ENCODE measurements at regions of chr19 and their contacts with region 1.

Region 1: DNA sequence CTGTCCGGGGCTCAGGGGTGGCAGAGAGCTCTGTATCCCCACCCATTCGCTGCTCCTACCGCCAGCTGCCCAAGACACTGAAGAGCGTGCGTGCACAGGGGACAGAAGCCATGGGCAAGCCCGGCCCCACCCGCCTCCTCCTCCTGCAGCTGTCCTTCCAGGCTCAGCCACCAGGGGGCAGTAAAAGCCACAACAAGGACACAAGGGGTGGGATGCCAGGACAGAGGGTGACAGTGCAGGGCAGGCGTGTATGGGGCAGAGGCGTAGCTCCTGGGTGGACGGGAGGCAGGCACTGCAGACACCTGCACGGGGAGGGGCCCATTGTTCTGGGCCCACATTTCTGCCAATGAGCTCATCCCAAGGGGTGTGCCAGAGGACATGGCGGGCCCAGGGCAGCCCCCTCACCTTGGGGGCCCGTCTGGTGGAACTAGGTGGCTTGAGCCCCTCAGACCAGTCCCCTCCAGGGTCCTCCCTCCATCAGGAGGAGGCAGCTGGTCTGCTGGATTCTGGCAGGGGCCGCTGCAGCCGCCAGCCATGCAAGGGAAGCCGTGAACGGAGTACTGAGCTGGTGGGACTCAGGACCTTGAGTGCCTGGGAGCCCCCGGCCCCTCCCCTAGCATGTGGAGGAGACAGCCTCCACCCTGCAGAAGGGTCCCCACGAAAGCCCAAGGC is 61.1 kb downstream of the MLLT1 start:
- DNase-seq: peak; percentile 88
- H3K4me3 ChIP-seq: no peak overlapping the region
- H3K27ac ChIP-seq: no peak overlapping the region
- H3K4me1 ChIP-seq: no peaks in the 10 kb centered on the region
- H3K27me3 ChIP-seq: no peaks in the 10 kb centered on the region
- CTCF ChIP-seq: peak; percentile 92 to 99 (median 98)
- POLR2A ChIP-seq: no peak

Region 2: DNA sequence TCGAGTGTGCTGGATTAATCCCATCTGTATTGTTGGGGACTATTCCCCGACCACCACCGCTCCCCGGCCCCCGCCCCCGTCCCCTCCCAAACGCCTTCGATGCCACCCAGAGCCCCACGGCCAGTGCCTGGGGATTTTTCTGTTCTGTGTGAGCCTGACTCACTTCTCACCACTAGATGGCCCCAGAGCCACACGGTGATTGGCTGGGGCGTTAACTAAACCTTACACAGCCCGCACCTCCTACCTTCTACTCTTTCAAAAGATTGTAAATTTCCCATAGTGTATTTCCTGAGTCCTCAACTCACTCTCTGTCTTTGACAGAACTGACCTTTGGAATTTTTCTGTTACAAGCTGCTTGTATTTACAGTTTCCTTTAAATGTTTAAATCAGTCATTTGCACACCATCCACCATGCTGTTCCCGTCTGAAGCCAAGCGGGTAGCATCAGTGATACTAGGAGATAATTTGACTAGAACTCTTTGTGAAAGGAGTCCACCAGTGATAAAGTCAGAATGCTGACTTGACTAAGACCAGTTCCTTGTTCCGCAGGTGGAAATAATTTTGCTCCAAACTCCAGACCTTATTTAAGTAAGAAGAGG is 169.7 kb before region 1 on chr19:
- intact Hi-C with region 1: loop called (anchors 5 kb)
- DNase-seq: peak; percentile 70
- H3K4me3 ChIP-seq: no peak overlapping the region
- H3K27ac ChIP-seq: no peak overlapping the region
- H3K4me1 ChIP-seq: no peaks in the 10 kb centered on the region
- H3K27me3 ChIP-seq: no peaks in the 10 kb centered on the region
- CTCF ChIP-seq: peak; percentile 56 to 88 (median 82)
- POLR2A ChIP-seq: no peak

Region 3: GRCh38 chr19:6279931-6280591 is 61.4 kb after region 1 on chr19 and contains the start of gene MLLT1:
- intact Hi-C with region 1: loop called (anchors 5 kb)
- DNase-seq: peak; percentile 97
- H3K4me3 ChIP-seq: peak within 1 kb of the TSS; percentile 76 to 83
- H3K27ac ChIP-seq: peak within 1 kb of the TSS; percentile 62 to 81
- H3K4me1 ChIP-seq: peaks cover 9% of the 10 kb centered on the region
- H3K27me3 ChIP-seq: no peaks in the 10 kb centered on the region
- CTCF ChIP-seq: peak; percentile 50 to 85 (median 78)
- POLR2A ChIP-seq: peak; percentile 43
- total RNA-seq, gene MLLT1: 39.9 to 41.4 TPM

Region 4: GRCh38 chr19:6297202-6297601 is 78.6 kb after region 1 on chr19:
- intact Hi-C with region 1: loop called (anchors 2 kb)
- DNase-seq: no peak
- H3K4me3 ChIP-seq: no peak overlapping the region
- H3K27ac ChIP-seq: no peak overlapping the region
- H3K4me1 ChIP-seq: no peaks in the 10 kb centered on the region
- H3K27me3 ChIP-seq: no peaks in the 10 kb centered on the region
- CTCF ChIP-seq: no peak
- POLR2A ChIP-seq: no peak

Region 5: GRCh38 chr19:6417713-6418561 is 199.3 kb after region 1 on chr19:
- intact Hi-C with region 1: loop called (anchors 5 kb)
- DNase-seq: no peak
- H3K4me3 ChIP-seq: no peak overlapping the region
- H3K27ac ChIP-seq: no peak overlapping the region
- H3K4me1 ChIP-seq: peaks cover under 1% of the 10 kb centered on the region
- H3K27me3 ChIP-seq: no peaks in the 10 kb centered on the region
- CTCF ChIP-seq: peak in 3 of 4 experiments; percentile 27 to 45 (median 43)
- POLR2A ChIP-seq: no peak

Region 6: GRCh38 chr19:6501740-6502648 is 283.4 kb after region 1 on chr19 and contains the start of gene TUBB4A:
- intact Hi-C with region 1: no loop called
- DNase-seq: no peak
- H3K4me3 ChIP-seq: peak within 1 kb of the TSS; percentile 16 to 25
- H3K27ac ChIP-seq: no peak within 1 kb of the TSS
- H3K4me1 ChIP-seq: peaks cover 4% of the 10 kb centered on the region
- H3K27me3 ChIP-seq: peaks cover 15% of the 10 kb centered on the region
- CTCF ChIP-seq: no peak
- POLR2A ChIP-seq: no peak
- total RNA-seq, gene TUBB4A: 0.23 to 100 TPM